Activated CD4-positive, alpha-beta T cell treated with anti-CD3 and anti-CD28 coated beads, Interleukin-2, amount 10 ng/mL, durations not matched to agents 24 days and 14 days (primary cell): ENCODE measurements at regions of chr6 and their contacts with region 1.

Region 1: GRCh38 chr6:149043476-149044130 is 273.9 kb upstream of the TAB2 start:
- DNase-seq: peak; percentile 72
- H3K4me3 Mint-ChIP-seq: no peak overlapping the region
- H3K27ac Mint-ChIP-seq: no peak overlapping the region
- H3K4me1 Mint-ChIP-seq: peaks cover 61% of the 10 kb centered on the region
- H3K27me3 Mint-ChIP-seq: no peaks in the 10 kb centered on the region

Region 2: GRCh38 chr6:149065658-149066556 is 22.3 kb after region 1 on chr6:
- intact Hi-C with region 1: loop called (anchors 1 kb)
- DNase-seq: peak; percentile 87
- H3K4me3 Mint-ChIP-seq: peak overlapping the region; percentile 65
- H3K27ac Mint-ChIP-seq: peak overlapping the region; percentile 94
- H3K4me1 Mint-ChIP-seq: peaks cover 50% of the 10 kb centered on the region
- H3K27me3 Mint-ChIP-seq: no peaks in the 10 kb centered on the region